Vagina (tissue), 2 donors: ENCODE measurements at regions of chr2 and their contacts with region 1.

Region 1: DNA sequence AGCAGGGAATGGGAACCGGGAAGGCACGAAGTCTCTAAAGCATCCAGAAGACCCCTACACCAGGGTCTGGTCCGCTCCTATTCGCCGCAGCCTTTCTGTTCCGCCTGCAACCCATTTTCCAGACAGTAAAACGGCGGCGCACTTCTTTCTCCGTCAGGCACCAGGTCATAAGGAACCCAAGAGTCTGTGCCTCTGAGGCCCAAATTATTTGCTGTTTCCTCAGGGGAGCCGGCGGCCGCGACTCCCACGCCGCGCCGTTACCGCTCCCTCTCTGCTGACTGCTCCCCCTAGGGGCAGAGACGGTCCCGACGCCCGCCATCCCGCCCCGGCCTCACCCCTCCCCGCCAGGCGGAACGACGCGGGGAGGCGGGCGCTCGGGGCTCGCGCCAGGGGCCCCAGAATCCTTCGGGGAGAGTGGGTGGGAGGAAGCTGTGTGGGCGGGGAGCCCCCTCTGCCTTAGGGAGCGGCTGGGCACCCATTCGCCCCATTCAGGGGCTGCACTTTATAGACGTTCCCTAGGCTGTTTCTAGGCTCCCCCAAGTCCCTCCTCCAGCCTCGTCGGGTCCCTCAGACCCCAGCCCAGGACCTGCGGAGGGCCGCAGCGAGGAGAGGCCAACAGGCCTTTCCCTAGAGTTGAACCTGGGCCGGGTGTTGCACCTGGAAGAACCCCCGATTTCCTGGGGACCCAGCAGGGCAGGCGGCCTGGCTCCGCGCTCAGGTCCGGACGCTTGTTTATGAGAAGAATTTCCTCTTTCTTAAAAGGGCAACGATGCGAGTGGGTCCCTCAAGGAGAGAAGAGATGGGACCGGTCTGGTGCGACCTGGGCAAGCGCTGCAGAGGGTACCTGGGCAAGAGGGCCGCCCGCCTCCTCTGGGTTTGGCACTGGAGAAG is 3.6 kb upstream of the CTDSP1 start:
- DNase-seq: peak in 1 of 2 donors; percentile 97
- H3K4me3 ChIP-seq: peak overlapping the region; percentile 79 to 90
- H3K27ac ChIP-seq: peak overlapping the region; percentile 99
- H3K4me1 ChIP-seq: peaks cover 20% of the 10 kb centered on the region
- H3K27me3 ChIP-seq: no peaks in the 10 kb centered on the region
- CTCF ChIP-seq: peak; percentile 73 to 91 (median 87)
- POLR2A ChIP-seq: peak in 1 of 2 donors; percentile 51

Region 2: GRCh38 chr2:217573571-217573970 is 822.5 kb before region 1 on chr2:
- intact Hi-C with region 1: no loop called
- DNase-seq: no peak
- H3K4me3 ChIP-seq: no peak overlapping the region
- H3K27ac ChIP-seq: no peak overlapping the region
- H3K4me1 ChIP-seq: no peaks in the 10 kb centered on the region
- H3K27me3 ChIP-seq: no peaks in the 10 kb centered on the region
- CTCF ChIP-seq: no peak
- POLR2A ChIP-seq: no peak

Region 3: GRCh38 chr2:218292048-218293014 is 103.7 kb before region 1 on chr2 and contains the start of gene TMBIM1:
- intact Hi-C with region 1: loop called (anchors 5 kb)
- DNase-seq: no peak
- H3K4me3 ChIP-seq: peak within 1 kb of the TSS; percentile 68 to 99
- H3K27ac ChIP-seq: peak within 1 kb of the TSS; percentile 100
- H3K4me1 ChIP-seq: peaks cover 85% of the 10 kb centered on the region
- H3K27me3 ChIP-seq: no peaks in the 10 kb centered on the region
- CTCF ChIP-seq: peak; percentile 59 to 97 (median 77)
- POLR2A ChIP-seq: peak; percentile 83 to 94
- total RNA-seq, gene TMBIM1: 232 TPM